Activated CD8-positive, alpha-beta T cell treated with anti-CD3 and anti-CD28 coated beads, Interleukin-2, amount 10 ng/mL, durations not matched to agents 7 days and 5 days (primary cell): ENCODE measurements at regions of chr5 and their contacts with region 1.

Region 1: GRCh38 chr5:80083101-80083890 is 48.1 kb downstream of the THBS4 start:
- DNase-seq: peak; percentile 28
- ATAC-seq: peak; percentile 83
- H3K4me3 Mint-ChIP-seq: peak overlapping the region; percentile 54
- H3K27ac Mint-ChIP-seq: peak overlapping the region; percentile 40
- H3K4me1 Mint-ChIP-seq: peaks cover 11% of the 10 kb centered on the region
- H3K27me3 Mint-ChIP-seq: no peaks in the 10 kb centered on the region

Region 2: GRCh38 chr5:79865579-79865978 is 217.7 kb before region 1 on chr5:
- CTCF ChIA-PET with region 1: interaction called, 12 read pairs
- POLR2A ChIA-PET with region 1: no interaction called
- DNase-seq: no peak
- ATAC-seq: no peak
- H3K4me3 Mint-ChIP-seq: no peak overlapping the region
- H3K27ac Mint-ChIP-seq: no peak overlapping the region
- H3K4me1 Mint-ChIP-seq: no peaks in the 10 kb centered on the region
- H3K27me3 Mint-ChIP-seq: peaks cover 33% of the 10 kb centered on the region

Region 3: GRCh38 chr5:79924936-79925893 is 158.1 kb before region 1 on chr5:
- CTCF ChIA-PET with region 1: interaction called, 25 read pairs
- POLR2A ChIA-PET with region 1: no interaction called
- DNase-seq: peak; percentile 26
- ATAC-seq: peak; percentile 49
- H3K4me3 Mint-ChIP-seq: no peak overlapping the region
- H3K27ac Mint-ChIP-seq: no peak overlapping the region
- H3K4me1 Mint-ChIP-seq: peaks cover 3% of the 10 kb centered on the region
- H3K27me3 Mint-ChIP-seq: peaks cover 17% of the 10 kb centered on the region

Region 4: DNA sequence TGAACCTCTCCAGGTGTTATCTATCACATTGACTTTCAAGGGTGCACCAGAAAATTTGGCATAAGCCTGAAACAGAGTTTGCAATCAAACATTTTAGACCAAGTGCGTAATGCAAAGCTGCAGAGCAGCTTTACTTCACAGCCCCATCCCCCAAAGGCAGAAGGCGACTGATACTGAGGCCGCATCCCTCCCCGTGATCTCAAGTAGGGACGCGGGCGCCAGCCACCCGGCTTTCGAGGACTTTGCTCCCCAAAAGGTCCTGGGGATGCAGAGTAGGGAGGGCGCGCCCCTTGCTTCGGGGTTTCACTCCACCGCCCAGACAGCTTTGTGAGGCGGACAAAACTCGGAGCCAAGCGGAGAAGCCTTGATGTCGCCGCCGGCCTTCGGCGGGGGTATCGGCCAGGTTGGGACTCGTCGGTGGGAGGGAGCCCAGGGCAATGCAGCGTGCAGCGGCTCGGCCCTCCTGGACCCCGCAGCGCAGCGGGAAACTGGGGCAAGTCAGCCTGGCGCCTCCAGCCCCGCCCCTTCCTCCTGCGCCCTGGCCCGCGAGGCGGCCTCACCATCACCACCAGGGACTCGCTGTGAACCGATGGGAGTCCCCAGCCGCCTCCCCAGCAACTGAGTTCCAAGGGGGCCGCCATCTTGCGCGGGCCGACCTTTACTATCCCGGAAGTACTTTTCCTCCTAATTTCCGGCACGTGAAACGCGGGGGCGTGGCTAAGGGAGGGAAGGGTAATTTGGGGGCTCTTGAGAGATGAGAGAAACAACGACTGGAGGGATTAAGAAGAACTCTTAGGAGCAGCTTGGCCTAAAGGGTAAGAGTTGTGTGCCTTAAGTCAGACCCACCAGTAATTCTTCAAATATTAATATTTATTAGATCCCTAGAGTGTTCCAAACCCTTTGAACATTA is 92.4 kb before region 1 on chr5 and contains the start of gene MTX3:
- CTCF ChIA-PET with region 1: interaction called, 10 read pairs
- POLR2A ChIA-PET with region 1: no interaction called
- DNase-seq: peak; percentile 92
- ATAC-seq: peak; percentile 88
- H3K4me3 Mint-ChIP-seq: peak within 1 kb of the TSS; percentile 91
- H3K27ac Mint-ChIP-seq: peak within 1 kb of the TSS; percentile 94
- H3K4me1 Mint-ChIP-seq: peaks cover 48% of the 10 kb centered on the region
- H3K27me3 Mint-ChIP-seq: no peaks in the 10 kb centered on the region
- total RNA-seq, gene MTX3: 11.7 to 13.2 TPM

Region 5: DNA sequence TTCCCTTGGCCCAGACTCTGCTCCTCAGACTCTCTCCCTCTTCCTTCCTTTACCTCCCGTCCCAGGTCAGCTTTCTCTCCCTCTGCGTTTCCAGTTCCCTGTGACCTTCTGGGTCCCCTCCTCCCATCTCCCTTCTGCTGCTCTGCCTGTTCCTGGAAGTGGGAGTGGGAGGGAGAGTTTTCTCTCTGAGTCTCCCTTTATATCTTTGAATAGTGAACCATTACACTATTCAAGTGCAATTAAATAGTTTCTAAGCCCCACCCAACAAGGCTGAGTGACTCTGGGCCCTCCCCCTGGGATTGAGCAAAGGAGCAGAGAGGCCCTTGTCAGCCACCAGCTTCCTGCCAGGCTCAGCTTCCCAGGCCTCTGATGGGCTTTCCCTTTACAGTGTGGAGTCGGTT is 13.4 kb before region 1 on chr5:
- CTCF ChIA-PET with region 1: interaction called, 21 read pairs
- POLR2A ChIA-PET with region 1: no interaction called
- DNase-seq: no peak
- ATAC-seq: peak; percentile 27
- H3K4me3 Mint-ChIP-seq: no peak overlapping the region
- H3K27ac Mint-ChIP-seq: peak overlapping the region; percentile 67
- H3K4me1 Mint-ChIP-seq: peaks cover 20% of the 10 kb centered on the region
- H3K27me3 Mint-ChIP-seq: no peaks in the 10 kb centered on the region

Region 6: DNA sequence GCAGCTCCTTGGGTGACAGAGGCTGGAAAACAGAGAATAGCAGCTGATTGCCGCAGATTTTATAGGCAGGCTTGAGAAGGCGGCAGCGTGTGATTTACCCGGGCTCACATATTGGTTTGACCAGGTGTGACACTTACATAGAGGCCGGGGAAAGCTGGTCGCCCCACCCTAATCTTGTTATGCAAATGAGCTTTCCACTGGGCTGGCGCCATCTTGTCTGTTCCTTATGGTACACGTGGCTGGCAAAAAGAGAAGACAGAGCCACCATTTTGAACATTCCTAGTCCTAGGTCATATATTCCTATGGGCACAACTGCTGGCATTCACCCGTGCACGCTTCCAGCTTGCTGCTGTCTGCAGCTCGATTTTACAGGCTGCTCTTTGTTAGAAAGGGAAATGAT is 225.2 kb after region 1 on chr5:
- CTCF ChIA-PET with region 1: interaction called, 27 read pairs
- POLR2A ChIA-PET with region 1: no interaction called
- DNase-seq: no peak
- ATAC-seq: no peak
- H3K4me3 Mint-ChIP-seq: no peak overlapping the region
- H3K27ac Mint-ChIP-seq: no peak overlapping the region
- H3K4me1 Mint-ChIP-seq: peaks cover 1% of the 10 kb centered on the region
- H3K27me3 Mint-ChIP-seq: peaks cover 6% of the 10 kb centered on the region